ENCODE measurements at regions of chr17 and their contacts with region 1.

Region 1: DNA sequence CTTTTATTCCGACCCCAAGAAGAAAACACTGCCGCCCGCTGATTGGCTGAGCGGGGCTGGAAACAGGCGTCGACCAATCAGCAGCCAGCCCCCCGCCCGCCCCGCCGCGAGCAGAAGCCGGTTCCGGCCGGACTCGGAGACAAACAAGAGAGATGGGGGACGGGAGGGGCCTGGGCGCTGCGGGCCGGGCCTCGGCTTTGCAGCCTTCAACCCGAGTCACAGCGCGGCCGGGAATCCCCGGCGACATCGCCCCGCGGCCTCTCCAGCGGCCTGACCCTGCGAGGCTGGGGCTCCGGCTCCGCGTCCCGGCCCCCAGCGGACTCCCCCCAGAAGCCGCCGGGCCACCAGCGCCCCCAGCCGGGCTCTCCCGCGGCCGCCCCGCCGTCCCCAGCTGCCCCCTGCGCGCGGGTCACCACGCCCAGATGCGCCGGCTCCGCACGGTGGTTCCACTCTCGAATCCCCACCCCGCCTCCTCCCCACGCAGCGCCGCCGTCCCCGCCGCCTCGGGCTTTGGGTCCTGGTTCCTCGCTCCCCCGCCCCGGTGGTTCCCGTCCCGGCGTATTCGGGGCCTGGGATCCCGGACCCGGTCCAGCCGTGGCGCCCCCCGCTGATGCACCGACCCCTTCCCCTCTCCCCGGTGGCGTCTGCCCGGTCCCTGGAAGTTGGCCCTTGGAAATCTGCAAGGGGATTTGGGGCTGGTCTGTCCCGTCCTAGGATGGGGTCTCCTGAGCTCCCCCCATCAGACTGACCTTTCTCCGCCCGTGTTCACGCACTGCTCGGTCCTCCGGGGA is 417 bp upstream of the SLC43A2 start:
- DNase-seq: peak; percentile 86 to 96
- H3K4me3 ChIP-seq: peak overlapping the region; percentile 65 to 80
- H3K27ac ChIP-seq: peak overlapping the region; percentile 72 to 86
- H3K4me1 ChIP-seq: peaks cover 0 to 14% of the 10 kb centered on the region in 2 donors
- H3K27me3 ChIP-seq: no peaks in the 10 kb centered on the region
- CTCF ChIP-seq: peak; percentile 16 to 82 (median 40)

Region 2: GRCh38 chr17:1365445-1366039 is 263.5 kb before region 1 on chr17:
- intact Hi-C with region 1: loop called (anchors 10 kb)
- DNase-seq: peak in 1 of 2 donors; percentile 70
- H3K4me3 ChIP-seq: peak overlapping the region; percentile 14 to 24
- H3K27ac ChIP-seq: peak overlapping the region in 1 of 2 donors; percentile 32
- H3K4me1 ChIP-seq: peaks cover 12 to 57% of the 10 kb centered on the region in 2 donors
- H3K27me3 ChIP-seq: no peaks in the 10 kb centered on the region
- CTCF ChIP-seq: peak; percentile 78 to 84 (median 81)

Region 3: DNA sequence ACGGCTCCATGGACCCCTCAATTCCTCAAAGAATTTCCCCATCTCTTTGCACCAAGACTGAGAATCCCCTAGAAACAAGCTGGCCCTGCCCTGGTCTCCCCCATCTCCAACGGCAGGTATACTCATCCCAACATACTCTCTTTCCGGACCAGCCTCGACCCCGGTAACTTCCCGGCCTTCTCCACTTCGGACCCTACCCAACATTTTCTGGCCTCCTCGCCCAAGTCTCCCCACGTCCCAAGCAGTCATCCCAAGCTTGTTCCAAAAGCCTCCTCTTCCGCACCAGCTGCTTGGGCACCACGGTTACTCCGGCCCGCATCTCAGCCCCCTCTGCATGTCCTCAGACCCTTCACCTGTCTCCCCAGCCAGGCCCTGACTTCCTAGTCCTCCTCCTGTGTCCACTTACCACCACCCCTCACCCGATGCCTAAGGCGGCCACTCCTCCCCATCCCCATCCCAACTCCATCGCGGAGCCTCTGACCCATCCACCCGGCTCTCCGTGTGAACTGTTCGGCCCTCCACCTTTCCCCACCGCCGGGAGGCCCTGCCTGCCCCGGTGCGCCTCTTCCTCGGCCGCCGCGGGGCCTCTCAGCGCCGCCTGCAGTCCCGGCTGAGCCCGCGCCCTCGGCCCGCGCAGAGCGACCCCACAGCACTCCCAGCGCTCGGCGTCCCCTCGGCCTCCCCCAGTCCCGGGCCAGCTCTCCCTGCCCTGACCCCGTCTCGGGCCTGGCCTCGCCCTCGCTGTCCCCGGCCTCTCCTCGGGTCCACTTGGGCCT is 67.5 kb before region 1 on chr17:
- intact Hi-C with region 1: no loop called
- DNase-seq: no peak
- H3K4me3 ChIP-seq: peak overlapping the region; percentile 97 to 98
- H3K27ac ChIP-seq: peak overlapping the region; percentile 89 to 91
- H3K4me1 ChIP-seq: peaks cover 7 to 17% of the 10 kb centered on the region in 2 donors
- H3K27me3 ChIP-seq: no peaks in the 10 kb centered on the region
- CTCF ChIP-seq: peak; percentile 16 to 46 (median 17)

Region 4: DNA sequence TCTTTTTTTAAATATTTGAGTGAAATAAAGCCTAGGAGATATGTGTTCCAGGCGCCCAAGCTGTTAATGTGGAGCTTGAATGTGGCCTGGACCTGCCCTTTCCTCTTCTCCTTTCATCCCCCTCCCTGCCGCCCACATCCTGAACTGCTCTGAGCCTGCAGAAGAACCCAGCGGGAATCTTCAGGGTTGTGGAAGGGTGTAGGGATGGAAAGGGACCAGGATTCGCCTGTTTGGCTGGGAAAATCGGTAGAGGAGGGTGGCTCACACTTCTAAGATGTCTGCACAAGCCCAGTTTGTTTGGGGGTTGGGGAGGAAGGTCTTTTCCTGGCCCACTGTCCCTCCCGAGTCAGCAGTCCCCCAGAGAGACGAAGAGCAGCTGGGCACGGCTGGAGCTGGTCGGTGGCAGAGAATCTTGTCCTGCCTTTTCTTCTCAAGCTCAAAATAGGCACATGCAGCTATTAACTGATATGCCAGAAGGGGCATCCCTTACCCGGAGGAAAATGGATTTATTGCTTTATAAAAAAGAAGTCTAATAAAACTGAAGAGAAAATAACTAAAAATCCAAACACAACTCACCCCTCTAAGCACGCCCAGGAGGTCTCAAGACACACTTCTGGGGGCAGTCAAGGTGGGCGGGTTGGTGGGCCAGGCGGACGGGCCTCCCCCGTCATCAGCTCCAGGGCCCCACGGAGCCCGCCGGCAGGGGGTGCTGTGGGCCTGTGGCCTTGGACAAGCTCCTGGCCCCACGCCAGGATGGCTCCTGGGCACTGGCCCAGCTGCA is 54.9 kb before region 1 on chr17:
- intact Hi-C with region 1: loop called (anchors 1 kb)
- DNase-seq: peak in 1 of 2 donors; percentile 94
- H3K4me3 ChIP-seq: no peak overlapping the region
- H3K27ac ChIP-seq: peak overlapping the region; percentile 22 to 26
- H3K4me1 ChIP-seq: peaks cover 17 to 23% of the 10 kb centered on the region in 2 donors
- H3K27me3 ChIP-seq: no peaks in the 10 kb centered on the region
- CTCF ChIP-seq: peak; percentile 95 to 99 (median 98)

Region 5: GRCh38 chr17:1590031-1590748 is 38.9 kb before region 1 on chr17:
- intact Hi-C with region 1: loop called (anchors 1 kb)
- DNase-seq: peak in 1 of 2 donors; percentile 92
- H3K4me3 ChIP-seq: peak overlapping the region; percentile 8 to 38
- H3K27ac ChIP-seq: peak overlapping the region; percentile 84 to 85
- H3K4me1 ChIP-seq: peaks cover 12 to 40% of the 10 kb centered on the region in 2 donors
- H3K27me3 ChIP-seq: no peaks in the 10 kb centered on the region
- CTCF ChIP-seq: no peak

Region 6: DNA sequence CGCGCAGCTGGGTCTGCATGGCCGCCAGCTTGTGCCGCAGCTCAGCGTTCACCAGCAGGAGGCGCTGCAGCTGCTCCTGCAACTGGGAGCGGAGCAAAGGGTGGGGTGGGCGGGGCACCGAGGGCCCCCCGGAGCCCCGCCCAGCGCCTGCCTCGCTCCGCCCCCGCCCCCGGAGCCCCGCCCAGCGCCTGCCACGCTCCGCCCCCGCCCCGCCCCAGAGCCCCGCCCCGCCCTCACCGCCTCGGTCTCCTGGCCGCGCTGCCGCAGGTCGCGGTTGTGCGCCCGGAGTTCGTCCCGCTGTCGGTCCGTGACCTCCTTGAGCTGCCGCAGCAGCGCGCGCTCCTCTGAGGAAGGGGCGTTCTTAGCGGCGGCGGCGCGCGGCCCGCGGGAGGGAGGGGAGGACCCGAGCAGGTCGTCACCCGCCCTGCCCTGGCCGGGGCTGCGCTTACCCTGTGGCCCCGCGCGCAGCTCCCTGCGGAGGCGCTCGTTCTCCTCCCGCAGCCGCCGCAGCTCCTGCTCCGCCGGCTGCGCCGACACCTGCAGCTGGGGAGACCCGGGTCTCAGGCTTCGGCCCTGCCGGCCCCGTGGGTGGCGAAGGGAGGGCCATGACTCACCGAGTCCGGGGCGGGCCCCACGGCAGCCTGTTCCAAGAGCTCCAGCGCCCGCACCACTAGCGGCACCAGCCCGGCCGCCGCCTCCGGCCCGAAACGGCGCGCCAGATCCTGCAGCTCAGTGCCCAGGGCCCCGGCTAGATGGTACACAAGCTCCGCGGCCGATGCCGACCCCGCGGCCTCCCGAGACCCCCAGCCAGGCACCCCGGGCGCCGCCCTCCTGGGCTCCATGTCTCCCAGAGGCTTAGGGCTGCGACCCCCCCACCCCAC is 20.2 kb after region 1 on chr17:
- intact Hi-C with region 1: loop called (anchors 1 kb)
- DNase-seq: peak; percentile 86 to 98
- H3K4me3 ChIP-seq: peak overlapping the region; percentile 74 to 92
- H3K27ac ChIP-seq: peak overlapping the region; percentile 94 to 99
- H3K4me1 ChIP-seq: peaks cover 4 to 22% of the 10 kb centered on the region in 2 donors
- H3K27me3 ChIP-seq: no peaks in the 10 kb centered on the region
- CTCF ChIP-seq: peak in 2 of 3 experiments; percentile 94 to 97

Region 7: GRCh38 chr17:1684378-1685189 is 55.5 kb after region 1 on chr17 and contains the start of gene PRPF8:
- intact Hi-C with region 1: loop called (anchors 2 kb)
- DNase-seq: peak; percentile 95 to 99
- H3K4me3 ChIP-seq: peak within 1 kb of the TSS; percentile 71 to 90
- H3K27ac ChIP-seq: peak within 1 kb of the TSS; percentile 83 to 95
- H3K4me1 ChIP-seq: peaks cover 0 to 16% of the 10 kb centered on the region in 2 donors
- H3K27me3 ChIP-seq: no peaks in the 10 kb centered on the region
- CTCF ChIP-seq: no peak
- total RNA-seq, gene PRPF8: 114 TPM

Measured in ascending aorta (tissue), 2 donors.